Heart right ventricle (tissue), 16 donors: ENCODE measurements at regions of chr2 and their contacts with region 1.

Region 1: DNA sequence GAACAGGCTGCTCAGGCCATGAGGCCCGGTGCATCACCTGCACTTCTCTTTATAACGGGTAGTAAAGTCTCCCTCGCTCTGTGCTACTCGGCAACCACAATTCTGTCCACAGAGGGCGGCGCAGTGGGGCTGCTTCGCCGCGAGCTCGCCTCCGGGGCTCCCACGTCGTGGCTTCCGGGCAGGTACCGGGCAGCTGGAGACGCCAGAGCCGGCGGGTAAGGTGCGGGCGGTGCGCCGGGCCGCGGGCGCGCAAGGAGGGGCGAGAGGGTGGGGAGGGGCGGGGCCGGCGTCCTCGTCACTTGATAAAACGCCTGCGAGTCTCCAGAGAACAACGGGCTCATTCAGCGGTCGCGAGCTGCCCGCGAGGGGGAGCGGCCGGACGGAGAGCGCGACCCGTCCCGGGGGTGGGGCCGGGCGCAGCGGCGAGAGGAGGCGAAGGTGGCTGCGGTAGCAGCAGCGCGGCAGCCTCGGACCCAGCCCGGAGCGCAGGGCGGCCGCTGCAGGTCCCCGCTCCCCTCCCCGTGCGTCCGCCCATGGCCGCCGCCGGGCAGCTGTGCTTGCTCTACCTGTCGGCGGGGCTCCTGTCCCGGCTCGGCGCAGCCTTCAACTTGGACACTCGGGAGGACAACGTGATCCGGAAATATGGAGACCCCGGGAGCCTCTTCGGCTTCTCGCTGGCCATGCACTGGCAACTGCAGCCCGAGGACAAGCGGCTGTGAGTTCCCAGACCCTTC is at the start of gene ITGA6:
- DNase-seq: peak; percentile 66 to 81
- ATAC-seq: peak; percentile 70 to 92 (median 76)
- H3K4me3 ChIP-seq: peak within 1 kb of the TSS; percentile 60 to 94 (median 80)
- H3K27ac ChIP-seq: peak within 1 kb of the TSS; percentile 64 to 97 (median 94)
- H3K4me1 ChIP-seq: peaks cover 5 to 51% (median 23%) of the 10 kb centered on the region in 9 donors
- H3K27me3 ChIP-seq: peaks cover 0 to 39% (median 0%) of the 10 kb centered on the region in 7 donors
- CTCF ChIP-seq: peak in 6 of 9 donors; percentile 22 to 57 (median 41)
- total RNA-seq, gene ITGA6: 36.0 to 68.3 (median 46.8) TPM

Region 2: DNA sequence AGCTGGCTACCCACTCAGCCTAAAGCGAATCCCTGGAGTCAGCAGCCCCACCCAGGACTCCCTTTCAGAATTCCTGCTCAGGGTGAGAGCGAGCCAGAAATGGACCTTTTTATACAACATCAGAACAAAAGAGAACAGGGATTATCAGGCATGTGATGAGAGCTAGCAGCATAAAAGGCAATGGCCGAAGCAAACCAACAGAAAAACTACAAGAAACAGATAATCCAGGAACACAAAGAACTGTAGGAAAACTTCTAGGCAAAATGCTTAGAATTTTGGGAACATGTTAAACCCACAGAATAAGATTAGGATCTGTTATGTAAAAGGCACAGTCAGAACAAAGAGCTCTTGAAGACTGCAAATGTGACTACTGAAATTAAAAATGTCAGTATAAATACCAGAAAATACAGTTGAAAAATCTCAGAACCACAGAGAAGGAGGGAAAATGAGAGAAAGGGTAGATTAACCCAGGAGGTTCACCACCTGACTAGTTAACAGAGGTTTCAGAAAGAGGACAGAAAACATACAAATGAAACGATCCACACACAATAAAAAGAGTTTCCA is 31.2 kb after region 1 on chr2:
- intact Hi-C with region 1: loop called in 5 of 10 experiments (anchors 2 to 5 kb)
- DNase-seq: no peak
- ATAC-seq: no peak
- H3K4me3 ChIP-seq: no peak overlapping the region
- H3K27ac ChIP-seq: peak overlapping the region in 2 of 10 donors; percentile 10 to 23
- H3K4me1 ChIP-seq: peaks cover 4 to 94% (median 74%) of the 10 kb centered on the region in 9 donors
- H3K27me3 ChIP-seq: peaks cover 0 to 6% (median 0%) of the 10 kb centered on the region in 7 donors
- CTCF ChIP-seq: no peak